CD14-positive monocyte (primary cell): ENCODE measurements at regions of chr1 and their contacts with region 1.

Region 1: DNA sequence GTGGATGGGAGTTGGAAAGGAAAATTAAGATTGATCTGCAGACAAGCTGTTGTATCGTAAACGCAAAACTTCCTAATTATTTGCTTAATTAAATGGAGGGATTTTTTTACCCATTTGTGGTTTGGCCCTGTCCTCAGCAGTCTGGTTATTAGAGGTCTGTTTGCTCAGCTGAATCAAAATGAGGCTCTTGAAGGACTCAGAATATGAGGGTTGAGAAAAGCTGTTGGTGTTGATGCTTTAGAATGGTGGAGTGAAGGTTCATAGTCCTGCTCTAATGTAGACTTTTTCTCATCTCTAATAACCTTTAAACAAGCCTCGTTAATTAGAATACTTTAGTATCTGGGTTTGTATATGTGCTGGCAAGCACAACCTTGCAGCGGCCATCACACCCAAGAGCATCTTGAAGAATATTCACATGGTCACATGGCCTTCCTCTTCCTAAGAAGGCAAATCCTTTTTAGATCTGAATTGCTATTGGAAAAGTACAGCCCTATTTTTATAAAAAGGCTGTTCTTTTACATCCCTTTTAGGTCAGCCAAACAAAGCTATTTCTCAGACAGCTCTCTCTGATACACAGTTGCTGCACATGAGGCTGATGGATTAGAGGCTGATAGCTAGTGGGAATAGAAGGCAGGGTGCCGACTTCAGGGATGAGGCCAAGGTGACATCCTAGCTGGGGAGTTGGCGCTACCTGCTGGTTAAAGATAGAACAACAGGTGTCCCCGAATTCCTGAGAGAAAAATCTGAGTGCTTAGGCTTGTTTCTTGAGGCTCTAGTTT is 53.8 kb downstream of the MACF1 start:
- DNase-seq: peak; percentile 33 to 52 (median 43)
- H3K4me3 ChIP-seq: no peak overlapping the region
- H3K4me3 Mint-ChIP-seq: no peak overlapping the region
- H3K27ac ChIP-seq: no peak overlapping the region
- H3K27ac Mint-ChIP-seq: peak overlapping the region in 1 of 7 donors; percentile 26
- H3K4me1 ChIP-seq: no peaks in the 10 kb centered on the region
- H3K4me1 Mint-ChIP-seq: no peaks in the 10 kb centered on the region
- H3K27me3 ChIP-seq: no peaks in the 10 kb centered on the region
- H3K27me3 Mint-ChIP-seq: no peaks in the 10 kb centered on the region
- CTCF ChIP-seq: peak; percentile 86

Region 2: DNA sequence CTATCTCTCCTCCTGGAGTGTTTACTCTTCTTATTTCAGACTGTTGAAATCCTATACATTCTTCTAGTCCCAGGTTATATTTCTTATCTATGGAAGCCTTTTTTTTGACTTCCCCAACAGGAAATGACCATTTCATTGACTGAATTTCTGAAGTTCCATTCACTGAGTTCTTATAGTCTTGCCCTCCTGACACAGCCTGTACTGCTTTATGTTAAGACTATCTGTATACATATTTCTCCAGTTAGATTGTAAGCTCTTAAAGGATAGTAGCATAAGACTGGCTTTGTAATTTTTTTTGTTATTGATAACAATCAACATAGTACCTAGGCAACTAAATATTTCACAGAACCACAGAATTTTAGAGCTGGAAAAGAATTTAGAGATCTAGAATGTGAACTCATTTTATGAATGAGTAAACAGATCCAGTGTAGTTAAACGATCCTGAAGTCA is 68.7 kb before region 1 on chr1:
- intact Hi-C with region 1: loop called (anchors 5 kb)
- DNase-seq: no peak
- H3K4me3 ChIP-seq: no peak overlapping the region
- H3K4me3 Mint-ChIP-seq: no peak overlapping the region
- H3K27ac ChIP-seq: no peak overlapping the region
- H3K27ac Mint-ChIP-seq: no peak overlapping the region
- H3K4me1 ChIP-seq: peaks cover 0 to 15% of the 10 kb centered on the region in 2 donors
- H3K4me1 Mint-ChIP-seq: peaks cover 20% of the 10 kb centered on the region
- H3K27me3 ChIP-seq: no peaks in the 10 kb centered on the region
- H3K27me3 Mint-ChIP-seq: peaks cover 0 to 4% (median 2%) of the 10 kb centered on the region in 3 donors
- CTCF ChIP-seq: no peak

Region 3: GRCh38 chr1:39214998-39215873 is 43.1 kb before region 1 on chr1:
- intact Hi-C with region 1: no loop called
- DNase-seq: peak; percentile 45 to 71 (median 66)
- H3K4me3 ChIP-seq: peak overlapping the region; percentile 56 to 99 (median 89)
- H3K4me3 Mint-ChIP-seq: peak overlapping the region; percentile 86 to 90
- H3K27ac ChIP-seq: peak overlapping the region; percentile 52 to 82
- H3K27ac Mint-ChIP-seq: peak overlapping the region; percentile 83 to 94 (median 89)
- H3K4me1 ChIP-seq: peaks cover 35 to 50% of the 10 kb centered on the region in 2 donors
- H3K4me1 Mint-ChIP-seq: peaks cover 56% of the 10 kb centered on the region
- H3K27me3 ChIP-seq: no peaks in the 10 kb centered on the region
- H3K27me3 Mint-ChIP-seq: no peaks in the 10 kb centered on the region
- CTCF ChIP-seq: no peak